Pancreas (tissue), 10 donors: ENCODE measurements at regions of chr2 and their contacts with region 1.

Region 1: GRCh38 chr2:127486247-127487058 is 39.8 kb downstream of the IWS1 start:
- DNase-seq: no peak
- ATAC-seq: no peak
- H3K4me3 ChIP-seq: no peak overlapping the region
- H3K27ac ChIP-seq: no peak overlapping the region
- H3K4me1 ChIP-seq: no peaks in the 10 kb centered on the region
- H3K27me3 ChIP-seq: no peaks in the 10 kb centered on the region
- CTCF ChIP-seq: no peak

Region 2: GRCh38 chr2:127226520-127227263 is 259.8 kb before region 1 on chr2:
- intact Hi-C with region 1: no loop called
- DNase-seq: peak in 5 of 6 donors; percentile 29 to 73 (median 59)
- ATAC-seq: peak; percentile 67 to 92 (median 87)
- H3K4me3 ChIP-seq: no peak overlapping the region
- H3K27ac ChIP-seq: peak overlapping the region in 1 of 4 donors; percentile 25
- H3K4me1 ChIP-seq: no peaks in the 10 kb centered on the region
- H3K27me3 ChIP-seq: peaks cover 0 to 4% (median 0%) of the 10 kb centered on the region in 4 donors
- CTCF ChIP-seq: no peak

Region 3: GRCh38 chr2:127313406-127313805 is 173.0 kb before region 1 on chr2:
- intact Hi-C with region 1: loop called in 1 of 3 experiments (anchors 10 kb)
- DNase-seq: no peak
- ATAC-seq: peak in 1 of 4 donors; percentile 23
- H3K4me3 ChIP-seq: no peak overlapping the region
- H3K27ac ChIP-seq: no peak overlapping the region
- H3K4me1 ChIP-seq: peaks cover 0 to 12% (median 6%) of the 10 kb centered on the region in 3 donors
- H3K27me3 ChIP-seq: no peaks in the 10 kb centered on the region
- CTCF ChIP-seq: no peak

Region 4: GRCh38 chr2:127324635-127325034 is 161.8 kb before region 1 on chr2:
- intact Hi-C with region 1: loop called in 2 of 3 experiments (anchors 10 kb)
- DNase-seq: peak in 1 of 6 donors; percentile 21
- ATAC-seq: peak in 3 of 4 donors; percentile 64 to 76 (median 74)
- H3K4me3 ChIP-seq: no peak overlapping the region
- H3K27ac ChIP-seq: no peak overlapping the region
- H3K4me1 ChIP-seq: no peaks in the 10 kb centered on the region
- H3K27me3 ChIP-seq: no peaks in the 10 kb centered on the region
- CTCF ChIP-seq: peak in 2 of 4 donors; percentile 36 to 39